Motor neuron (in vitro differentiated cells): ENCODE measurements at regions of chr2 and their contacts with region 1.

Region 1: DNA sequence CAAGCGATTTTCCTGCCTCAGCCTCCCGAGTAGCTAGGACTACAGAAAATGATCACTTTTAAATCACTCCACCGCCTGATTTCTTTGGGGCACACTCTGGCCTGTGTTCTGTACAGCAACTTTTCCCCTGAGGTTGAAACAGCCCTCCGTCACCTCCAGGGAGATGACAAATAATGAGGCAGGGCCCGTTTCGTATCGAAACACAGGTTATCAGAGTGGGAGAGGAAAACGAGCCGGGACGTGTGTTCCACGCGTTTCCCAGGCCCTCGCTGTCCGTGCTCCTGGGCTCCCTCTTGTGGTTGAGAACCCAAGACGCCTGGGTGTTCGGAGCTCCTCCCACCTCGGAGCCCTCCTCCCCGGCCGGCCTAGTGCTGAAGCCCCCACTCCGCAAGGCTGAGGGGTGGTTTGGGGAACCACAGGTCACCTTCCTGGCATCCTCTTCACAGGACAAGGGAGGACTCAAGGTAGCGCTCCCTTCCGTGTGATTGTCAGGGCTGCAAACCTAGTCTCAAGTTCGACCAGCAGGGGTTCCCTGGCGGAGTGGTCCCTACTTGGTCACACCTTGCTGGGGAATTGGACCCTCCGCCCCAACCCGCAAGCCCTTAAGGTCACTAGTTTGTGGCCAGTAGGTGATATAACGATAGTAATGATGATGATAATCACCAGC is 12.8 kb downstream of the ATP6V1B1 start:
- ATAC-seq: peak; percentile 92 to 99 (median 94)
- H3K4me3 ChIP-seq: peak overlapping the region in 2 of 5 donors; percentile 4 to 10
- H3K27ac ChIP-seq: no peak overlapping the region
- H3K4me1 ChIP-seq: peaks cover 5% of the 10 kb centered on the region in 2 donors

Region 2: GRCh38 chr2:70861777-70862625 is 86.5 kb before region 1 on chr2:
- in situ Hi-C with region 1: loop called in 4 of 9 experiments (anchors 10 to 25 kb)
- ATAC-seq: peak; percentile 94 to 100 (median 98)
- H3K4me3 ChIP-seq: no peak overlapping the region
- H3K27ac ChIP-seq: no peak overlapping the region
- H3K4me1 ChIP-seq: no peaks in the 10 kb centered on the region

Region 3: DNA sequence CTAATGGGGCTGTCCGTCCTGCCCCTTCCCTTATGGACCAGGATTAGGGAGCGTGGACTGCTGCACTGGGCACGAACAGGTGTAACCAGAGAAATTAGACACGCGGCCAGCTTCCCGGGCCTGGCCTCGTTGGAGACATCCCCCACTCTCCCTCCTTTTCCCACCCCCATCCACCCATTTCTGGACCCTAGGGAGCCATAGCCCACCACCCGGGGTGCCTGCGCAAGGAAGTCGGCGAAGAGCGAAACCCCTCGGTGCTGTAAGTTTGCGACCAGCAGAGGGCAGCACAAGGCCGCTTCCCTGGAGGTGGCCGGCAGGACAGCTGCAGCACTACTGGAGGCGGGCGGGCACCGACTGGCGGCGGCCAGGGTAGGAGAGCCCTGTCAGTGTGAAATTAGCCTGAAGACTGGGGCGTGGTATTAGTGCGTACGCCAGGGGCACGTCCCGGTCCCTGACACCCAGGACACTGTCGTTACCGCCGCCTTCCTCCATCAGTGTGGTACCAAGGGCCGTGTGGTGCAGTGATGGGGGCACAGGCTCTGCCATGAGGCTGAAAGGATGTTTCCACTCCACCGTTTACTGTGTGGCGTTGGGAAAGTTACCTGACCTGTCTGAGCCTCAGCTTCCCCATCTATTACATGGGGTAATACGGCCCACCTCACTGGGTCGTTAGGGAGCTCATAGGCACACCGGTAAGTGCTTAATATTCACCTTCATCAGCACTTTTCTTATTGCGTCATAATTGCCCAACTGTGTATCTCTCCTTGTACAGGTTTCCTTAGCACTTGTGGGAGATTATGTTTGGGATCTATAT is 76.9 kb before region 1 on chr2:
- in situ Hi-C with region 1: loop called in 6 of 9 experiments (anchors 5 to 25 kb)
- ATAC-seq: peak; percentile 96 to 99 (median 99)
- H3K4me3 ChIP-seq: peak overlapping the region in 1 of 5 donors; percentile 5
- H3K27ac ChIP-seq: no peak overlapping the region
- H3K4me1 ChIP-seq: peaks cover 0 to 4% of the 10 kb centered on the region in 2 donors